ENCODE measurements at regions of chr10 and their contacts with region 1.

Region 1: GRCh38 chr10:784403-785088 is 95.1 kb upstream of the DIP2C start:
- DNase-seq: peak in 3 of 4 donors; percentile 36 to 87 (median 70)
- ATAC-seq: peak; percentile 74
- H3K4me3 ChIP-seq: peak overlapping the region; percentile 18 to 22
- H3K27ac ChIP-seq: no peak overlapping the region
- H3K4me1 ChIP-seq: peaks cover 0 to 8% of the 10 kb centered on the region in 2 donors
- H3K27me3 ChIP-seq: peaks cover 0 to 70% of the 10 kb centered on the region in 2 donors
- CTCF ChIP-seq: no peak

Region 2: GRCh38 chr10:511101-511848 is 273.3 kb before region 1 on chr10:
- intact Hi-C with region 1: loop called in 1 of 2 experiments (anchors 10 kb)
- DNase-seq: peak; percentile 75 to 95 (median 92)
- ATAC-seq: peak; percentile 93
- H3K4me3 ChIP-seq: no peak overlapping the region
- H3K27ac ChIP-seq: peak overlapping the region in 1 of 2 donors; percentile 37
- H3K4me1 ChIP-seq: peaks cover 0 to 6% of the 10 kb centered on the region in 2 donors
- H3K27me3 ChIP-seq: no peaks in the 10 kb centered on the region
- CTCF ChIP-seq: peak; percentile 88 to 94

Region 3: GRCh38 chr10:607545-608185 is 176.9 kb before region 1 on chr10:
- intact Hi-C with region 1: no loop called
- DNase-seq: no peak
- ATAC-seq: no peak
- H3K4me3 ChIP-seq: no peak overlapping the region
- H3K27ac ChIP-seq: no peak overlapping the region
- H3K4me1 ChIP-seq: no peaks in the 10 kb centered on the region
- H3K27me3 ChIP-seq: no peaks in the 10 kb centered on the region
- CTCF ChIP-seq: no peak

Measured in left lung (tissue), 14 donors.